ENCODE measurements at regions of chr17 and their contacts with region 1.

Region 1: DNA sequence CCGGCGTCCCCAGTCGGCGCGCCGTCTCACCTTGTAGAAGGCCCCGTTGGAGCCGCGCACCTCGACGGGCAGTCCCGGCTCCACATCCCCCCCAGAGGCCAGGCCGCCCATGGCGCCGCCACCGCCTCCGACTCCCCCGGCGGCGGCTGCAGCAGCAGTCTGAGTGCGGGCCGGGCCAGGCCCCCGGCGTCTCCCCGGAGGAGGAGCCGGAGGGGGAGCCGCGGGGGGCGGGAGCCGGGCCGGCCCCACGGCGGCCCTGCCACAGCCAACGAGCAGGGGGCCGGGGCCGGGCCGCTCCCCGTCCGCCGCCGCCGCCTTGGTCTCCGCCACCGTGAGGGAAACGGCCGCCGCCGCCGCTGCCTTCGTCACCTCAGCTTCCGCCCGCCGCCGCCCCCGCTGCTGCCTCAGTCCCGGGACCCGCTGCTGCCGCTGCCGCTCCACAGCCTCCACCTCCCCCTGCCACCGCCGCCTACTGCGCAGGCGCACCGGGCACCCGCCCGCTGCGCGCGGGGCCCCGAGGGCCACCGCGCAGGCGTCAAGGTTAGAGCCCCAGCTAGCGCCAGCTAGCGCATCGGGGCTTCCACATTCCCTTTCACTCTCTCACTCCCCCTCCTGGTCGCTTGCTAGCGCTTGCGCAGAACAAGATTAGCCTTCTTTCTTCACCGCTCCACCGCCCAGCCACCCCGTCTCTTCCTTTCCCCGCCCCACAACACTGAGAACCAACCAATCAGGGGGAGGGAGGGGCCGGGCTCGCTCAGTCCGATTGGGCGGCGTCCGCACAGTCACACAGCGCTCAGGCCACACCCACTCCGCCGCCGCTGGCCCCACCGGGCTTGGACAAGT is at the start of gene FXR2:
- DNase-seq: peak; percentile 97
- ATAC-seq: peak; percentile 90
- H3K4me3 Mint-ChIP-seq: peak within 1 kb of the TSS; percentile 91
- H3K27ac Mint-ChIP-seq: peak within 1 kb of the TSS; percentile 95
- H3K4me1 Mint-ChIP-seq: peaks cover 25% of the 10 kb centered on the region
- H3K27me3 Mint-ChIP-seq: no peaks in the 10 kb centered on the region
- total RNA-seq, gene FXR2: 37.7 to 38.2 TPM

Region 2: DNA sequence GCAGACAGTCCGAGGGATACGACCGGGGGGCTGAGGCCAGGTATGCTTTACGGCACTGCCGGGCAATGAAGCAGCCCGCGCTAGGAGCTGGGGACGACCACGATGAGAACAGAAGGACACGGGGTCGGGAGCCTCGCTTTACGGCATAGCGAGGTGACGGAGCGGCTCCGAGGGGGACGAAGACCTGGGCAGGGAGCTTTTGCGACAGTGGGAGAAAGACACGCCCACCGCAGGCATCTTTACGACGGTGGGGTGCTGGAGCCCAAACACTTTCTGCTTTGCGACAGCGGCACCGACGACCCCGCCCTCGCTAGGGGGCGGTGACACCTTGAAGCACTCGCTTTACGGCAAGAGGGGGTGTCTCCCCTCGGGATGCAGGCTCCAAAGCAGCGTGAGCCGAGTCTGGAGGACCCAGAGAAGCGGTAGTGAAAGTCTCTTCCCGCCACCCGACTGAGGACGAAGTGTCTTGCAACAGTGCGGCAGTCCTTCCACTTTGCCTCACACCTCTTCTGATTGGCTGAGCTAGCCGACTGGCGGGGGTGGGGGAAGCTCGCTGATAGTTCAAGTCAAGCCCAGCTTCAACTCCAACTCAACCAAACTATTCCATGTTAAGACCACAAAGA is 285.2 kb before region 1 on chr17:
- POLR2A ChIA-PET with region 1: no interaction called
- DNase-seq: peak; percentile 94
- ATAC-seq: peak; percentile 59
- H3K4me3 Mint-ChIP-seq: peak overlapping the region; percentile 88
- H3K27ac Mint-ChIP-seq: peak overlapping the region; percentile 93
- H3K4me1 Mint-ChIP-seq: peaks cover 26% of the 10 kb centered on the region
- H3K27me3 Mint-ChIP-seq: no peaks in the 10 kb centered on the region

Region 3: GRCh38 chr17:7561028-7561575 is 53.5 kb before region 1 on chr17:
- POLR2A ChIA-PET with region 1: no interaction called
- DNase-seq: peak; percentile 85
- ATAC-seq: peak; percentile 54
- H3K4me3 Mint-ChIP-seq: peak overlapping the region; percentile 83
- H3K27ac Mint-ChIP-seq: peak overlapping the region; percentile 87
- H3K4me1 Mint-ChIP-seq: peaks cover 55% of the 10 kb centered on the region
- H3K27me3 Mint-ChIP-seq: no peaks in the 10 kb centered on the region

Region 4: GRCh38 chr17:7627250-7628121 is 12.8 kb after region 1 on chr17 and contains the start of gene SAT2:
- POLR2A ChIA-PET with region 1: interaction called, 22 read pairs
- DNase-seq: peak; percentile 80
- ATAC-seq: peak; percentile 96
- H3K4me3 Mint-ChIP-seq: peak within 1 kb of the TSS; percentile 95
- H3K27ac Mint-ChIP-seq: peak within 1 kb of the TSS; percentile 85
- H3K4me1 Mint-ChIP-seq: peaks cover 14% of the 10 kb centered on the region
- H3K27me3 Mint-ChIP-seq: no peaks in the 10 kb centered on the region
- total RNA-seq, gene SAT2: 40.0 to 41.2 TPM

Region 5: DNA sequence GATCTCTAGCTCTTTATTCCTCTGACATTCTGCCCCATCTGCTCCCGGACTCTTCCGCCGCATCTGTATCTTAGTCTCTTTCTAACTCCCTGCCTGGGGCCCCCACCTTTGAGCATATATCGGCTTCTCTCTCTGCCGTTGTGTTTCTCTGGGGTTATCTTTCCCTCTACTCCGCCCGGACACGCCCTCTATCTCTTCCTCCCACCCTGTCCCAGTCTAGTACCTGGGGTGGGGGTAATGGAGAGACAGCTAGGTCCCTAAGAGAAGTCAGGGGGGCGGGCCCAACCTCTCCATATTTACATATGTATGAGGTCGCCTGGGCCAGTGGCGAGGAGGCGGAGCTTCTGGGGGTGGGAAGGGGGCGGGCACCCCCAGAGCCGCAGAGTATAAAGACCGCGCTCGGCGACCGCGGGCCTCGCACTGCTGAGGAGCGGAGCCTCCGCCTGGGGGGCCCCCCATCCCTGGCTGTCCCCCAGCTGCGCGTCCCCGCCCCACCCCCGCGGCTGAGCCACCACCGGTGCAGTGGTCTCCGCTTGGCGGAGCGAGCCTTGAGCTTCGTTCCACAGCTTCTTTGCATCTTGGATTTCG is 36.0 kb after region 1 on chr17 and contains the start of gene ATP1B2:
- POLR2A ChIA-PET with region 1: interaction called, 11 read pairs
- DNase-seq: peak; percentile 71
- ATAC-seq: peak; percentile 86
- H3K4me3 Mint-ChIP-seq: peak within 1 kb of the TSS; percentile 84
- H3K27ac Mint-ChIP-seq: peak within 1 kb of the TSS; percentile 35
- H3K4me1 Mint-ChIP-seq: peaks cover 11% of the 10 kb centered on the region
- H3K27me3 Mint-ChIP-seq: peaks cover 49% of the 10 kb centered on the region
- total RNA-seq, gene ATP1B2: 0.14 to 0.42 TPM

Measured in activated naive CD8-positive, alpha-beta T cell treated with anti-CD3 and anti-CD28 coated beads, Interleukin-2, amount 10 ng/mL, durations not matched to agents 7 days and 5 days (primary cell).